ENCODE measurements at regions of chr3 and their contacts with region 1.

Region 1: GRCh38 chr3:134364061-134364935 is 9.9 kb downstream of the AMOTL2 start:
- DNase-seq: peak; percentile 96
- H3K4me3 Mint-ChIP-seq: peak overlapping the region; percentile 29
- H3K27ac Mint-ChIP-seq: peak overlapping the region; percentile 28
- H3K4me1 Mint-ChIP-seq: peaks cover 30% of the 10 kb centered on the region
- H3K27me3 Mint-ChIP-seq: no peaks in the 10 kb centered on the region
- CTCF ChIP-seq: no peak

Region 2: DNA sequence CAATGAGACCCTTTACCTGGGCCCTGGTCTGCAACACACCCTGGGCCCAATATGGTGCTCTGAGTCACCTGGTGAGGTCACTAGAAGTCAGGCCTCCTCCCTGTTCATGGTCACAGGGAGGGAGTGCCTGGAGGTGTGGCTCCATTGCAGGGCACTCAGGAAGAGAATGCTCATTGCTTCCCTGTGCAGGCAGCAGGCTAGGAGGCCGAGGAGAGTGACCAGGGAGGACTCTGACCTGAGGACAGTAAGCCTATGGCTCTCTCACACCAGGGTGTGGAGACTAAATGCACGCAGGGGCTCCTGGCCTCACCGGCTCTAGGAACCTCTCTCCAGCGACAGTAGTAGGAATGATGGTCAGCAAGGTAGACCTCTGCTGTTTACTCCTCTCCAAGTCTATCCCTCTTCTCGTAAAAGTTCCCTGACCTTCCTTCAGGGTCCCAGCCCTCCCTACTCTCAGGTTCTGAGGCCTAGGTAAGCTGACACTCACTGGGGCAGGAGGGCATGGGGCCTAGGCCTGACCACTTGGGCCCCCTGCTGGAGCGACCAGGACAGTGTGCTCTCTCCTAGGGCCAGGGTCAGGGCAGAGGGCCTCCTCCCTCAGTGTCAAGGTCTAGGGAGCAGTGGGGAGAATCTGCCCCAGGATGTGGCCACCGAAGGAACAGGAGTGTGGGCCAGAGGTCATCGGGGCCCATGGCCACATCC is 325.0 kb before region 1 on chr3:
- CTCF ChIA-PET with region 1: no interaction called
- POLR2A ChIA-PET with region 1: no interaction called
- intact Hi-C with region 1: no loop called
- DNase-seq: peak; percentile 52
- H3K4me3 Mint-ChIP-seq: no peak overlapping the region
- H3K27ac Mint-ChIP-seq: peak overlapping the region; percentile 46
- H3K4me1 Mint-ChIP-seq: peaks cover 13% of the 10 kb centered on the region
- H3K27me3 Mint-ChIP-seq: no peaks in the 10 kb centered on the region
- CTCF ChIP-seq: no peak

Region 3: GRCh38 chr3:134320749-134321148 is 43.5 kb before region 1 on chr3:
- CTCF ChIA-PET with region 1: interaction called, 13 read pairs
- POLR2A ChIA-PET with region 1: interaction called, 45 read pairs
- intact Hi-C with region 1: no loop called
- DNase-seq: peak; percentile 84
- H3K4me3 Mint-ChIP-seq: no peak overlapping the region
- H3K27ac Mint-ChIP-seq: peak overlapping the region; percentile 66
- H3K4me1 Mint-ChIP-seq: peaks cover 43% of the 10 kb centered on the region
- H3K27me3 Mint-ChIP-seq: no peaks in the 10 kb centered on the region
- CTCF ChIP-seq: no peak

Region 4: GRCh38 chr3:134333522-134334181 is 30.6 kb before region 1 on chr3:
- CTCF ChIA-PET with region 1: interaction called, 12 read pairs
- POLR2A ChIA-PET with region 1: interaction called, 45 read pairs
- intact Hi-C with region 1: no loop called
- DNase-seq: no peak
- H3K4me3 Mint-ChIP-seq: no peak overlapping the region
- H3K27ac Mint-ChIP-seq: peak overlapping the region; percentile 84
- H3K4me1 Mint-ChIP-seq: peaks cover 83% of the 10 kb centered on the region
- H3K27me3 Mint-ChIP-seq: no peaks in the 10 kb centered on the region
- CTCF ChIP-seq: no peak

Region 5: GRCh38 chr3:134348524-134348923 is 15.8 kb before region 1 on chr3:
- CTCF ChIA-PET with region 1: interaction called, 11 read pairs
- POLR2A ChIA-PET with region 1: interaction called, 95 read pairs
- intact Hi-C with region 1: no loop called
- DNase-seq: peak; percentile 56
- H3K4me3 Mint-ChIP-seq: no peak overlapping the region
- H3K27ac Mint-ChIP-seq: peak overlapping the region; percentile 77
- H3K4me1 Mint-ChIP-seq: peaks cover 39% of the 10 kb centered on the region
- H3K27me3 Mint-ChIP-seq: no peaks in the 10 kb centered on the region
- CTCF ChIP-seq: no peak

Region 6: GRCh38 chr3:134430950-134431445 is 66.7 kb after region 1 on chr3:
- CTCF ChIA-PET with region 1: no interaction called
- POLR2A ChIA-PET with region 1: no interaction called
- intact Hi-C with region 1: no loop called
- DNase-seq: no peak
- H3K4me3 Mint-ChIP-seq: no peak overlapping the region
- H3K27ac Mint-ChIP-seq: no peak overlapping the region
- H3K4me1 Mint-ChIP-seq: peaks cover 11% of the 10 kb centered on the region
- H3K27me3 Mint-ChIP-seq: no peaks in the 10 kb centered on the region
- CTCF ChIP-seq: no peak

Region 7: DNA sequence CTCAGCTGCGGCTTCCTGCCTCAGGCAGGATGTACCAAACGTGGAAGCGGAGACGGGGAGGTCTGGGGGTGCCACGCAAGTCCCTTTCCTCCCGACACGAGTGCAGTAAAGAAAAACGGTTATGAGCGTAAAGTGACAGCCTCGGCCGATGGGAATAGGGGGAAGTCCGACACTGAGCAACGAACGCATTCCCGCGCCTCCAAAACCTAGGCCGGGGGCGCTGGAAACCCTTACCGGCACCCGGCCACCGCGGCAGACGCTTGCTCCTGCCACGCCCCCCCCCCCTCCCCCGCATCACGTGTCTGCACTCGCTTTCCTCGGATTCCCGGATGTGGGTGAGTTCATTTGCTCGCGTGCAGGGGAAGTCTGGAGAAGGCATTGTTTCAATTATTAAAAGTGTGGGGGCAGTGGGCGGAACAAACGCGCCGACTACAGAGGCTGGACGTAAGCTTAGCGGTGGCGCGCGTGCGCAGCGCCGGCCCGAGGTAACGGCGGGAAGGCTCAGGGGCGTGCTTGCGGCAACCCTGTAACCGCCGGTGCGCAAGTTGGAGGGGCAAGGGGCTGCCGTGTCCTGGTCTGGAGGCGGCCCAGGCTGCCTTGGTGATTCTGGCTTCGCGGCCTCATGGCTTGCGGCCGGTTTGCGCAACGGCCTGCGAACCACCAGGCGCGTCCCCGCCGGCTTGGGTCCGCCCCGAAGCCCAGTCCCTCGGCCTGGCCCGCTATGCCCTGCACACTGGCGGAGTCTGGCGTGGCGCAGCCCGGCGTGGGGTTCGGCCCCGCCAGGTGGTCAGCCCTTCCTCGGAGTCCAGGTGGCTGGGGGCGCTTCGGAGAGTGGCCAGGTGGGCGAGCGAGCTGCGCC is 121.6 kb after region 1 on chr3 and contains the starts of genes ANAPC13 and CEP63:
- CTCF ChIA-PET with region 1: interaction called, 449 read pairs
- POLR2A ChIA-PET with region 1: interaction called, 42 read pairs
- intact Hi-C with region 1: no loop called
- DNase-seq: peak; percentile 98
- H3K4me3 Mint-ChIP-seq: peak within 1 kb of the TSS; percentile 75
- H3K27ac Mint-ChIP-seq: peak within 1 kb of the TSS; percentile 87
- H3K4me1 Mint-ChIP-seq: peaks cover 31% of the 10 kb centered on the region
- H3K27me3 Mint-ChIP-seq: no peaks in the 10 kb centered on the region
- CTCF ChIP-seq: no peak
- total RNA-seq, gene ANAPC13: 61.5 and 78.4 TPM in 2 replicates
- total RNA-seq, gene CEP63: 37.0 and 40.0 TPM in 2 replicates